Activated T-helper 2 cell treated with anti-CD3 and anti-CD28 coated beads, Interferon-gamma antibody, Interleukin-2, Interleukin-4, amounts not matched to agents 10 μg/mL and 5 μg/mL and 100 μg/mL, durations not matched to agents 14 hours and 24 hours and 36 hours (primary cell): ENCODE measurements at regions of chr22 and their contacts with region 1.

Region 1: GRCh38 chr22:35627264-35628041 is 10.3 kb upstream of the MB start:
- DNase-seq: no peak
- H3K4me3 Mint-ChIP-seq: peak overlapping the region; percentile 69
- H3K27ac Mint-ChIP-seq: peak overlapping the region; percentile 24
- H3K4me1 Mint-ChIP-seq: peaks cover 25% of the 10 kb centered on the region
- H3K27me3 Mint-ChIP-seq: peaks cover 13% of the 10 kb centered on the region

Region 2: DNA sequence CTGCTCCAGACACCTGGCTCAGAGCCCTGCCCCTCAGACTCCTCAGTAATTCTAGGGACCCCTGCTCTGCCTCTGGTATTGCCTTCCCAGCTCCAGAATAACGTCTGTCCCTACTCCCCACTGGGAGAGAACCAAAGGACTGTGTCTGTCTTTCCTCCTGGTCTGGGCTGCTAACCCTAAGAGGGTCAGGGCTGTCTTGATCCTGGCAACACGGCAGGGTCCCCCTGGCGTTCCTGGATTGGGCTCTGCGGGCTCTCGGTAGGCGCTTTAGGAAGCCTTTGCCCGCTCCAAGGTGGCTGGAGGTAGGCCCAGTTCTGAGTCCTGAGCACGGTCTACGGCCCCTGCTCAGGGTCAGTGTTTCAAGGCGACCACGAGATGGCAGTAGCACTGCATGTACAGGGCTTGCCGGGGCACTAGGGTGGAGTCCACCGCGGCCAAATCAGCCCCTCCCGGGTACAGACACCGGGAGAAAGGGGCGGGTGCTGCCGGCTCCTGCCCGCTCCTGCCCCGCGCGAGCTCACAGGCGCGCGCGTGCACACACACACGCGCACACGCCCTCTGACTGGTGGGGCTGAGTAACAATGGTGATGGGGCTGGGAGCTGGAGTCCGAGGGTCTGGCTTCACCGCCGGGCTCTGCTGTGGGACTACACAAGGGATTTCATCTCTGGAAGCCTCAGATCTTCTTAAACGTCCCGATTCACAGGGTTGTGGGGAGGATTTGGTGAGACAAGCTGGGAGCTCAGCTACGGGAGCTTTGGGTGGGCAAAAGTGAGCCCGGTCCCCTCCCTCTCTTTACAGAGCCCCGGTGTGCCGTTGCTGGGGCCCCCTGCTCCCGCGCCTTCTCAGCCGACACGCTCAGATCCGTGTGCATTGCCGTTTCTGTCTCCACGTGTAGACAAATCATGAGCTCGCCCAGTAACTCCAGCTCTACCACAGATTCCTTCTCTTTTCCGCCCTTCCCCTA is 276.6 kb before region 1 on chr22:
- intact Hi-C with region 1: loop called (anchors 1 kb)
- DNase-seq: peak; percentile 84
- H3K4me3 Mint-ChIP-seq: peak overlapping the region; percentile 79
- H3K27ac Mint-ChIP-seq: peak overlapping the region; percentile 58
- H3K4me1 Mint-ChIP-seq: peaks cover 25% of the 10 kb centered on the region
- H3K27me3 Mint-ChIP-seq: no peaks in the 10 kb centered on the region

Region 3: GRCh38 chr22:35611891-35612576 is 15.4 kb before region 1 on chr22:
- intact Hi-C with region 1: no loop called
- DNase-seq: no peak
- H3K4me3 Mint-ChIP-seq: no peak overlapping the region
- H3K27ac Mint-ChIP-seq: no peak overlapping the region
- H3K4me1 Mint-ChIP-seq: peaks cover 33% of the 10 kb centered on the region
- H3K27me3 Mint-ChIP-seq: peaks cover 14% of the 10 kb centered on the region

Region 4: GRCh38 chr22:35648066-35649025 is 20.9 kb after region 1 on chr22 and contains the start of gene APOL6:
- intact Hi-C with region 1: loop called (anchors 2 kb)
- DNase-seq: peak; percentile 69
- H3K4me3 Mint-ChIP-seq: peak within 1 kb of the TSS; percentile 99
- H3K27ac Mint-ChIP-seq: peak within 1 kb of the TSS; percentile 100
- H3K4me1 Mint-ChIP-seq: peaks cover 21% of the 10 kb centered on the region
- H3K27me3 Mint-ChIP-seq: no peaks in the 10 kb centered on the region
- total RNA-seq, gene APOL6: 21.2 and 21.9 TPM in 2 replicates

Region 5: GRCh38 chr22:35697142-35697541 is 69.7 kb after region 1 on chr22:
- intact Hi-C with region 1: loop called (anchors 5 kb)
- DNase-seq: peak; percentile 57
- H3K4me3 Mint-ChIP-seq: no peak overlapping the region
- H3K27ac Mint-ChIP-seq: no peak overlapping the region
- H3K4me1 Mint-ChIP-seq: no peaks in the 10 kb centered on the region
- H3K27me3 Mint-ChIP-seq: no peaks in the 10 kb centered on the region

Region 6: GRCh38 chr22:35835998-35836691 is 208.7 kb after region 1 on chr22:
- intact Hi-C with region 1: no loop called
- DNase-seq: no peak
- H3K4me3 Mint-ChIP-seq: no peak overlapping the region
- H3K27ac Mint-ChIP-seq: no peak overlapping the region
- H3K4me1 Mint-ChIP-seq: peaks cover 17% of the 10 kb centered on the region
- H3K27me3 Mint-ChIP-seq: peaks cover 26% of the 10 kb centered on the region

Region 7: GRCh38 chr22:36065775-36066559 is 438.5 kb after region 1 on chr22:
- intact Hi-C with region 1: loop called (anchors 5 kb)
- DNase-seq: peak; percentile 59
- H3K4me3 Mint-ChIP-seq: peak overlapping the region; percentile 80
- H3K27ac Mint-ChIP-seq: peak overlapping the region; percentile 57
- H3K4me1 Mint-ChIP-seq: peaks cover 6% of the 10 kb centered on the region
- H3K27me3 Mint-ChIP-seq: peaks cover 6% of the 10 kb centered on the region